ENCODE measurements at regions of chr1 and their contacts with region 1.

Region 1: DNA sequence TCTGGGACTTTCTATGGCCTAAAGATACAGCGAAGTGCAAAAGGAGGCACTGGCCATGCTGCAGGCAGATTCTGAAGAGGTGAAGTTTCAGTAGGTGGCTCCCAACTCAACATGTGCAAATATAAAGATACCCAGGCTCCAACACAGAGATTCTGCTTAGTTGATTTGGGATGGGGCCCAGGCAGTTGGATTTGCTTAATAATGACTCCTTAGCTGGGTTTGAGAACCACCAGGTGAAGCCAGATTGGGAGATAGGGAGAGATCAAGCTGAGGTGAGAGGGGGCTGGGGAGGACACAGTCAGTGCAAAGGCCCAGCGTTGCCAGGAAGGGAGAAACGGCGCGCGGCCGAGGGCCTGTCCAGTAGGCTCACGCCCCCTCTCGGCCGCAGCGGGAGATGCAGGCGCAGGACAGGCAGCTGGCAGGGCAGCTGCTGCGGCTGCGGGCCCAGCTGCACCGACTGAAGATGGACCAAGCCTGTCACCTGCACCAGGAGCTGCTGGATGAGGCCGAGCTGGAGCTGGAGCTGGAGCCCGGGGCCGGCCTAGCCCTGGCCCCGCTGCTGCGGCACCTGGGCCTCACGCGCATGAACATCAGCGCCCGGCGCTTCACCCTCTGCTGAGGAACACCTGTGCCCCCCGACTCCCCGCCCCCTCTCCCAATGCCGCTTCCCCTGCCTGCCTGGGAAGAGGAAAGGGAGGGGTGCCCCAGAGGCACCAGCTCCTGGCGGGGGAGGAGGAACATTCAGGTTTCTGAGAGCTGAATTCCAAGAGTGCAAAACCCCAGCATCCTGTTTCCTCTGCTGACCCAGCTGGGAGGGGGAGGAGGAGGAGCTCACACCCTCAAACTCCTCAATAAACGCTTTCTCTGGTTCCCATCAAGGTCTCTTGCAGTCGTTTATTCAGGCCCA is 1.2 kb downstream of the FAM167B start:
- DNase-seq: peak; percentile 96
- ATAC-seq: peak; percentile 85
- H3K4me3 Mint-ChIP-seq: peak overlapping the region; percentile 57
- H3K27ac Mint-ChIP-seq: peak overlapping the region; percentile 53
- H3K4me1 Mint-ChIP-seq: peaks cover 40% of the 10 kb centered on the region
- H3K27me3 Mint-ChIP-seq: peaks cover 4% of the 10 kb centered on the region
- CTCF ChIP-seq: peak; percentile 95

Region 2: DNA sequence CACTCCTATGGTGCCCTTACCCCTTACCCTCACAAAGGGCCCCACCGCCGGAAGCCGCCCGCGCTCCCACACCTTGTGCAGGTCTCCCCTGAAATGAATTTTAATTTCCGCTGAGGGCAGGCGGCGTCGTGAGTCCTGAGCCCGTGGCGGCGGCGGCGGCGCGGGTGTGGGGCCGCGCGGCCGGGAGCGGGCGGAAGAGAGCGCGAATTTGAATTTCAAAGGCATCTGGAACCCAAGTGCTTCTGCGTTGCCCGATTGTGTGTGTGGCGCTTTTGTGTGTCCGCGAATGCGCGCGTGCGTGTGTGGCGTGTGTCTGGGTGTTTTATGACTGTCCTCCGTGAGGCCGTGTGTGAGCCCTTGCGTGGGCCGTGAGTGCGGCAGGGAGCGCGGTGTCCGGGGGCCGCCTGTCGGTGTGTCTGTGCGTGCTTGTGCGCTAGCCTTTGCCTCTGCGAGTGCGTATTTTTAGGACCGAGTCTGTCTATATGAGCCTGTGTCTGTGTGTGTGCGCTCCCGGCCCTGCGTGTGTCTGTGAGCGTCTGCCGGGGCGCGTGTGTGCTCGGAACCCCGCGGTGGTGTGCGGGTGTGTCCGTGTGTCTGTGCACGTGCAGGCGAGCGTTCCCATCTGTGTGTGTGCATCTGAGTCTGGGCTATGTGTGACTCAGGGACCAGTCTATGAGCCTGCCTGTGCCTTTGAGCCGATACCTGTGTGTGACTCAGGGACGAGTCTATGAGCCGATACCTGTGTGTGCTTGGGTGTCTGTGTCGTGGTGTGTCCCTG is 476.2 kb before region 1 on chr1:
- CTCF ChIA-PET with region 1: no interaction called
- POLR2A ChIA-PET with region 1: no interaction called
- DNase-seq: no peak
- ATAC-seq: peak; percentile 38
- H3K4me3 Mint-ChIP-seq: peak overlapping the region; percentile 73
- H3K27ac Mint-ChIP-seq: peak overlapping the region; percentile 49; the same call in 1 of the 2 replicates
- H3K4me1 Mint-ChIP-seq: peaks cover 45% of the 10 kb centered on the region
- H3K27me3 Mint-ChIP-seq: peaks cover 56% of the 10 kb centered on the region
- CTCF ChIP-seq: no peak

Region 3: DNA sequence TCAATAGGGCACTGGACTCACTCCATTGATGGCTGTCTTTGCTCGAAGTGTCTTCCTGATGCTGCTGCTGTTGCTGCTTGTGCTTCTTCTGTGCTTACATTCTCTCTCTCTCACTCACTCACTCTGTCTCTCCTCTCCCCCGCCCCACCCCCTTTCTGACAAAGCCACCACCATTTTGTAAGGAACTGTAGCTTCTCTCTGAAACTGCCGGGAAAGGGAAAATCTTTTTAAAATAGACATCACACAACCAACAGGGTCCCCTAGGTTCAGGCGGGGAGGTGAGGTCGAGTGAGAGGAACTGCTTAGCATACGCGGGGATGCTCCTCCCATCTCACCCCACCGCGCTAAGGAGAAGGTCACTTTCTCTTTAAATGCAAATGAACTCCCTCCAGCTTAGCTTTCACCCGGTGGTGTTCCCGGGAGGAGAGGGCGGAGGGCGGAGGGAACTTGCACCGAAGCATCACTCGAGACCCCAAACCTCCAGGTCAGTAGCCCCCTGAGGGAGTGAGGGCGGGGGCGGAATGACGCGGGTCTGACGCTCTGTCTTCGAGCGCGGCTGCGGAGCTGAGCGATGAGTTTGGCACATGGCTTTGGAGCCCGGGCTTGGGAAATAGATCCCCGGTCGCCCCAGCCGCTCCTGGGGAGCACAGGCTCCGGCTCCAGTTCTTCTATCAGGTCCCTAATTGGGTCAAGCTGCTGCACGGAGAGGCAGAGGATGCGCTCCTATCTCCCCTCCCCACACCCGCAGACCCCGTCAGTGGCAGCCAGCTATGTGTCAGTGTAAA is 47.8 kb before region 1 on chr1 and contains the start of gene CCDC28B:
- CTCF ChIA-PET with region 1: interaction called, 10 read pairs
- POLR2A ChIA-PET with region 1: interaction called, 7 read pairs
- DNase-seq: peak; percentile 71
- ATAC-seq: peak; percentile 71
- H3K4me3 Mint-ChIP-seq: peak within 1 kb of the TSS; percentile 84
- H3K27ac Mint-ChIP-seq: peak within 1 kb of the TSS; percentile 69
- H3K4me1 Mint-ChIP-seq: peaks cover 40% of the 10 kb centered on the region
- H3K27me3 Mint-ChIP-seq: peaks cover 8% of the 10 kb centered on the region
- CTCF ChIP-seq: no peak
- total RNA-seq, gene CCDC28B: 29.0 to 34.4 TPM (median 29.9 TPM) in 3 replicates

Region 4: GRCh38 chr1:32234792-32235191 is 13.4 kb before region 1 on chr1:
- CTCF ChIA-PET with region 1: interaction called, 75 read pairs
- POLR2A ChIA-PET with region 1: interaction called, 30 read pairs
- DNase-seq: peak; percentile 30
- ATAC-seq: no peak; the same call in 1 of the 2 replicates
- H3K4me3 Mint-ChIP-seq: no peak overlapping the region
- H3K27ac Mint-ChIP-seq: peak overlapping the region; percentile 5; the same call in 1 of the 2 replicates
- H3K4me1 Mint-ChIP-seq: peaks cover 12% of the 10 kb centered on the region
- H3K27me3 Mint-ChIP-seq: no peaks in the 10 kb centered on the region
- CTCF ChIP-seq: no peak

Region 5: DNA sequence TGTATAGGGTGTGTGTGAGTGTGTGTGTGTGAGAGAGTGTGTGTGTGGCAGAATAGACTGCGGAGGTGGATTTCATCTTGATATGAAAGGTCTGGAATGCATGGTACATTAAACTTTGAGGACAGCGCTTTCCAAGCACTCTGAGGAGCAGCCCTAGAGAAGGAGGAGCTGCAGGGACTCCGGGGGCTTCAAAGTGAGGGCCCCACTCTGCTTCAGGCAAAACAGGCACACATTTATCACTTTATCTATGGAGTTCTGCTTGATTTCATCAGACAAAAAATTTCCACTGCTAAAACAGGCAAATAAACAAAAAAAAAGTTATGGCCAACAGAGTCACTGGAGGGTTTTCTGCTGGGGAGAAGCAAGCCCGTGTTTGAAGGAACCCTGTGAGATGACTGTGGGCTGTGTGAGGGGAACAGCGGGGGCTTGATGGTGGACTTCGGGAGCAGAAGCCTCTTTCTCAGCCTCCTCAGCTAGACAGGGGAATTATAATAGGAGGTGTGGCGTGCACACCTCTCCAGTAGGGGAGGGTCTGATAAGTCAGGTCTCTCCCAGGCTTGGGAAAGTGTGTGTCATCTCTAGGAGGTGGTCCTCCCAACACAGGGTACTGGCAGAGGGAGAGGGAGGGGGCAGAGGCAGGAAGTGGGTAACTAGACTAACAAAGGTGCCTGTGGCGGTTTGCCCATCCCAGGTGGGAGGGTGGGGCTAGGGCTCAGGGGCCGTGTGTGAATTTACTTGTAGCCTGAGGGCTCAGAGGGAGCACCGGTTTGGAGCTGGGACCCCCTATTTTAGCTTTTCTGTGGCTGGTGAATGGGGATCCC is 25.4 kb after region 1 on chr1:
- CTCF ChIA-PET with region 1: interaction called, 39 read pairs
- POLR2A ChIA-PET with region 1: interaction called, 16 read pairs
- DNase-seq: peak; percentile 79
- ATAC-seq: peak; percentile 95
- H3K4me3 Mint-ChIP-seq: peak overlapping the region; percentile 67
- H3K27ac Mint-ChIP-seq: peak overlapping the region; percentile 94
- H3K4me1 Mint-ChIP-seq: peaks cover 38% of the 10 kb centered on the region
- H3K27me3 Mint-ChIP-seq: no peaks in the 10 kb centered on the region
- CTCF ChIP-seq: no peak

Region 6: DNA sequence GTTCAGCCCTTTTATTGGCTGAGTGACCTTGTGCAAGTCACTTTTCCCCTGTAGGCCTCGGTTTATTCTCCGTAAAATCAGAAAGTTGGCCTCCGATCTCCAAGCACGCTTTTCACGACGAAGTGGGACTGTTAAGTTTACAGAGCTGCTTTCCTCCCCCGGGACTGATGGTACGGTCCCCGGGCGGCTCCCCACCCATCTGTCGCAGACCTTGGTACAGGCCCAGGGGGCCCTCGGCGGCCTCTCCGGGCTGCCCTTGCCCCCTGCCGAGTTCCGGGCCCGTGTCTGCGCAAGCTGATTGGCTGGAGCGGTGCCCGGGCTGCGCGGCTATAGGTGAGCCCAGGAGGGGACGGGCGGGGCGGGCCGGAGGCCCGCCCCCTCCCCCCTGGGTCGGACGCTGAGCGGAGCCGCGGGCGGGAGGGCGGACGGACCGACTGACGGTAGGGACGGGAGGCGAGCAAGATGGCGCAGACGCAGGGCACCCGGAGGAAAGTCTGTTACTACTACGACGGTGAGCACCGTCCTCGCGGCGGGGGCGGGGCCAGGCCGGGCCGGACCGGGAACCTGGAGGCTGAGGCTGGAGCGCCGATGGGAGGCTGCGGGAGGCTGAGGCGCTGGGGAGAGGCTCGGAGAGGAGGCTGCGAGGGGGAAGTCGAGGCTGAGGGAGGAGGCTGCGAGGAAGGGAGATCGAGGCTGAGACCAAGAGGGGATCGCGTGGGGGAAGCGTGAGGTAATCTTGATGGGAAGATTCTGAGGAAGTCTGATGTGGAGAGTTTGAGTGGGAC is 43.7 kb after region 1 on chr1 and contains the start of gene HDAC1:
- CTCF ChIA-PET with region 1: interaction called, 18 read pairs
- POLR2A ChIA-PET with region 1: interaction called, 5 read pairs
- DNase-seq: peak; percentile 91
- ATAC-seq: peak; percentile 91
- H3K4me3 Mint-ChIP-seq: peak within 1 kb of the TSS; percentile 99
- H3K27ac Mint-ChIP-seq: peak within 1 kb of the TSS; percentile 85
- H3K4me1 Mint-ChIP-seq: peaks cover 23% of the 10 kb centered on the region
- H3K27me3 Mint-ChIP-seq: no peaks in the 10 kb centered on the region
- CTCF ChIP-seq: no peak
- total RNA-seq, gene HDAC1: 108 to 120 TPM (median 119 TPM) in 3 replicates

Region 7: DNA sequence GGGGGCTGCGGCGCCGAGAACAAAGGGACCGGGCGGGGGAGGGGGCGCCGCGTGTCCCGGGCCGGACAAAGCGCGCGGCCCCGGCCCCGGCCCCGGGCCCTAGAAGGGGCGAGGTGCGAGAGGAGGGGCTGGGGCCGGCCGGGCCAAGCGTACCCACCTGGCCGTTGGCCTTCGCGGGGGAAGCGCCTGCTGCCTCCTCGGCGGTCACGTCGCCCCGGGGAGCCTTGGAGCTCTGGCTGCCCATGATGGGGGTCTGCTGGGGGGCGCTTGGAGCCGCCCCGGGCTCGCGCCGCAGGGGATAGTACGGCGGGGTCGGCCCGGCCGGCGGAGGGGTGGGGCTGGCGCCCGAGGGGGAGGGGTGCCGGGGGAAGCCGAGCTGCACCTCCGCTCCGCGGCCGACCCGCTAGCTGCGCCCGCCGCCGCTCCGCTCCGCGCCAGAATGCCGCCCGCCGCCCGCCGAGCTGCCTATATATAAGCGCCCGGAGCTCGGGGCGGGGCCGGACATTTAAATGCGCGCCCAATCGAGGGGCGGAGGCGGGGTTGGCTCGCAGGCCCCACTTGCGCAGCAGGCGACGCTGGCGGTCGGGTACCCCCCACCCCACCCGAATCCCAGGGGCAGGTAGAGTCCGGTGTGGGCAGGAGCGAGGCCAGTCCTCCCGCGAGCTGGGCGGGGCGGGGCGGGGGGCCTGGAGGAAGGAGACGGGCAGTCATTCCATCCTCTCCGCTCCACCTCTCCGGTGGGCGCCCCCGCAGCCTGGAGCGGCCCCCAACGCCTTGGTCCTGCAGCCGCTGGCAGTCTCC is 87.8 kb after region 1 on chr1 and contains the start of gene MARCKSL1:
- CTCF ChIA-PET with region 1: interaction called, 10 read pairs
- POLR2A ChIA-PET with region 1: interaction called, 11 read pairs
- DNase-seq: peak; percentile 82
- ATAC-seq: peak; percentile 43
- H3K4me3 Mint-ChIP-seq: peak within 1 kb of the TSS; percentile 95
- H3K27ac Mint-ChIP-seq: peak within 1 kb of the TSS; percentile 96
- H3K4me1 Mint-ChIP-seq: peaks cover 44% of the 10 kb centered on the region
- H3K27me3 Mint-ChIP-seq: peaks cover 16% of the 10 kb centered on the region
- CTCF ChIP-seq: no peak
- total RNA-seq, gene MARCKSL1: 442 to 450 TPM (median 443 TPM) in 3 replicates

Measured in WTC11 (cell line).